CD8-positive, alpha-beta T cell (primary cell): ENCODE measurements at regions of chr5 and their contacts with region 1.

Region 1: DNA sequence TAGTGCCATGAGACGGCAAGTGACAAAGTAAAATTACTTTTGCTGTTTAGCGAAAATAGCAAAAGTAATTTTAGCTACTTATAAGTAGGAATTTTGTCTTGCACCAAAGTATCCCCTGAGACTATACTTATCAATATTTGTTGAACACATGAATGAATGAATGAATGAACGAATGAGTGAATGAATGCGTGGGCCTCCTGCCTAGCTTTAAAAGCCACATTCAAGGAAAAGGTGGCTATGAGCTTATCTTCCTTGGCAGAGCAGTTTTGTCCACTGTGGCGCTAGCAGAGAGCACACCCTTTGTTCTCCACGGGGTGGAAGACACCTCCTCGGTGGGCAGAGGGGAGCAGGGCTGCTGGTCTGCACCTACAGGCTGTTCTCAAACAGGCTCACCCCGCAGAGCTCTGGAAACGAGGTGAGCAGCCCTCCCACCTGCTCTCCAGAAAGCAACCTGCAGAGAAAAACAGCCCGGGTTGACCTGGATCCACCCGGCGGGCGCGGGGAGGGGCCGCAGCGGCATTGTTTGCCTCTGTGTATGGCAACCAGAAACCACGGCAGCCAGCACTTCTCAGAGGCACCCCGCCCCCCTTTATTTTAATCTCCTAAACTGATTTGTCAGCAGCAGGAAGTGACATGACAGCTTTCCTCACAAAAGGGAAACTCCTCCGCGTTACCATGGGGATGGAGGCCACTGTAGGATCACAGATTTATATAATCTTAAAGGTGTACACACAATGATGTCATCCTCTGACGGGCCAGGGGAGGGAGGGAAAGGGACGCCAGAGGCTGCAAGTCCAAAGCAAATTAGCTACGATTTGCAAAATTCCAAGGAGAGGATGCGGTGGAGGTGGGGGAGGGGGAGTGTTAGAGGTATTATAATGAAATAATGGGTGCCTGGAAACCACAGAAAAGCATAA is 5.9 kb downstream of the DUSP1 start:
- DNase-seq: peak; percentile 88 to 100 (median 96)
- ATAC-seq: peak; percentile 77
- H3K4me3 ChIP-seq: peak overlapping the region; percentile 41 to 48
- H3K4me3 Mint-ChIP-seq: peak overlapping the region; percentile 81
- H3K27ac ChIP-seq: peak overlapping the region; percentile 86 to 89
- H3K27ac Mint-ChIP-seq: peak overlapping the region; percentile 96
- H3K4me1 ChIP-seq: peaks cover 33% of the 10 kb centered on the region
- H3K4me1 Mint-ChIP-seq: peaks cover 52% of the 10 kb centered on the region
- H3K27me3 ChIP-seq: no peaks in the 10 kb centered on the region
- H3K27me3 Mint-ChIP-seq: no peaks in the 10 kb centered on the region
- CTCF ChIP-seq: no peak

Region 2: DNA sequence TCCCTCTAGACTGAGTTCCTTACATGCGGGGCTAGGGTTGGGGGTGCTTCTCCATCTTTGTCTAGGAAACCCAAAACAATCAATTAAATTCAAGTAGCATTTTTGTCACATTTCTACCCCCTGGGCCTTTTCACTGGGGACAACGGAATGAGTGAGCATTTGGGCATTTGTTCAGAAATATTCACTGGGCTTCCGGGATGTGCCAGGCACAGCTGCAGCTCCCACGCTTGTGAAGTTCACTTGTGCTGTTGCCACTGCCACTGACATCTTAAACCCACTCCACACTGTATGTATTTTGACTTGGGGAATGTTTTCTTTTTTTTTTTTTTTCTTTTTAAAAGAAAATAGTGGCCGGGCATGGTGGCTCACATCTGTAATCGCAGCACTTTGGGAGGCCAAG is 25.7 kb before region 1 on chr5:
- CTCF ChIA-PET with region 1: no interaction called
- POLR2A ChIA-PET with region 1: no interaction called
- intact Hi-C with region 1: no loop called
- DNase-seq: no peak
- ATAC-seq: no peak
- H3K4me3 ChIP-seq: no peak overlapping the region
- H3K4me3 Mint-ChIP-seq: no peak overlapping the region
- H3K27ac ChIP-seq: no peak overlapping the region
- H3K27ac Mint-ChIP-seq: no peak overlapping the region
- H3K4me1 ChIP-seq: no peaks in the 10 kb centered on the region
- H3K4me1 Mint-ChIP-seq: peaks cover 4% of the 10 kb centered on the region
- H3K27me3 ChIP-seq: no peaks in the 10 kb centered on the region
- H3K27me3 Mint-ChIP-seq: no peaks in the 10 kb centered on the region
- CTCF ChIP-seq: no peak

Region 3: GRCh38 chr5:172777881-172778814 is 13.0 kb after region 1 on chr5:
- CTCF ChIA-PET with region 1: interaction called, 4 read pairs
- POLR2A ChIA-PET with region 1: interaction called, 19 read pairs
- intact Hi-C with region 1: no loop called
- DNase-seq: peak in 1 of 9 experiments; percentile 47
- ATAC-seq: peak; percentile 52
- H3K4me3 ChIP-seq: peak overlapping the region; percentile 18 to 22
- H3K4me3 Mint-ChIP-seq: peak overlapping the region; percentile 59
- H3K27ac ChIP-seq: peak overlapping the region; percentile 82 to 95
- H3K27ac Mint-ChIP-seq: peak overlapping the region; percentile 94
- H3K4me1 ChIP-seq: peaks cover 23% of the 10 kb centered on the region
- H3K4me1 Mint-ChIP-seq: peaks cover 38% of the 10 kb centered on the region
- H3K27me3 ChIP-seq: no peaks in the 10 kb centered on the region
- H3K27me3 Mint-ChIP-seq: no peaks in the 10 kb centered on the region
- CTCF ChIP-seq: no peak

Region 4: DNA sequence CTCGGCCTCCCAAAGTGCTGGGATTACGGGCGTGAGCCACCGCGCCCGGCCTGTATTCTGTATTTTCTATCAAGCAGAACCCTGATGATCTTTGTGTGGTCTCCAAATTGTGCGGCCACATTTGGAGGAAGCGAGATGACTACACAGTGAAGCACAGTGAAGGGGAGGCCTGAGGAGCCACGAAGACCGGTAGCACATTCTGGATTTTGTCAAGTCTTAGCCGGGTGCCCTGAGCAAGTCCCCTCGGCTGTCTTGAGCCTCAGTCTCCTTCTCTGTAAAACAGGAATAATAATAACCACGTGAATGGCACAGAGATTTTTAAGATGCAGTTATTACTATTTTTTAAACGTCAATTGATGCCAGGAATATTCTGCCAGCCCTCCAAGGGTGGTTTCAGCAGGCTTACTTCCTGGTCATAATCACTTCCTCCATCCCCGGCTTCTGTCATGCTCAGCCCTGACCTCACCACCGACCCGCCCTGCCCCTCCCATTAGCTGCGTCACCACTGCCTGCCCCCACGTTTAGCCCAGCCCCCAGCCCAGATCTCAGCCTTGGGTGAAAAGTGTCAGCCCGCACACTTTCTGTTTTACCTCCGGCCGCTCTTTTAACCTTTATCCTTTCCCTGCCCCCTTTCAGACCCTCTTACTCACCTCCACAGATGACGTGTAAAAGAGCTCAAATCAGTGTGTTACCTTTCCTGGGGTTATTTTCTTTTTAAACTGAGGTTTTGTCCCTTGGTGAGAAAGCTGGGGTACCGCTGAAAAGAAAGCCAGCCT is 42.0 kb after region 1 on chr5:
- CTCF ChIA-PET with region 1: no interaction called
- POLR2A ChIA-PET with region 1: no interaction called
- intact Hi-C with region 1: loop called in 1 of 2 experiments (anchors 1 kb)
- DNase-seq: peak; percentile 69 to 95 (median 83)
- ATAC-seq: peak; percentile 96
- H3K4me3 ChIP-seq: peak overlapping the region; percentile 39 to 47
- H3K4me3 Mint-ChIP-seq: peak overlapping the region; percentile 77
- H3K27ac ChIP-seq: peak overlapping the region; percentile 61 to 79
- H3K27ac Mint-ChIP-seq: peak overlapping the region; percentile 90
- H3K4me1 ChIP-seq: peaks cover 10% of the 10 kb centered on the region
- H3K4me1 Mint-ChIP-seq: peaks cover 12% of the 10 kb centered on the region
- H3K27me3 ChIP-seq: no peaks in the 10 kb centered on the region
- H3K27me3 Mint-ChIP-seq: no peaks in the 10 kb centered on the region
- CTCF ChIP-seq: no peak